ENCODE measurements at regions of chr15 and their contacts with region 1.

Region 1: GRCh38 chr15:63093486-63094205 is 28.0 kb upstream of the LACTB start:
- DNase-seq: peak; percentile 91 to 95
- H3K4me3 ChIP-seq: no peak overlapping the region
- H3K4me1 ChIP-seq: no peaks in the 10 kb centered on the region; the same call in 1 of the 2 replicates
- H3K27me3 ChIP-seq: no peaks in the 10 kb centered on the region

Region 2: GRCh38 chr15:62792986-62793751 is 300.5 kb before region 1 on chr15:
- in situ Hi-C with region 1: loop called (anchors 5 kb)
- DNase-seq: no peak
- H3K4me3 ChIP-seq: no peak overlapping the region
- H3K4me1 ChIP-seq: no peaks in the 10 kb centered on the region
- H3K27me3 ChIP-seq: no peaks in the 10 kb centered on the region

Region 3: DNA sequence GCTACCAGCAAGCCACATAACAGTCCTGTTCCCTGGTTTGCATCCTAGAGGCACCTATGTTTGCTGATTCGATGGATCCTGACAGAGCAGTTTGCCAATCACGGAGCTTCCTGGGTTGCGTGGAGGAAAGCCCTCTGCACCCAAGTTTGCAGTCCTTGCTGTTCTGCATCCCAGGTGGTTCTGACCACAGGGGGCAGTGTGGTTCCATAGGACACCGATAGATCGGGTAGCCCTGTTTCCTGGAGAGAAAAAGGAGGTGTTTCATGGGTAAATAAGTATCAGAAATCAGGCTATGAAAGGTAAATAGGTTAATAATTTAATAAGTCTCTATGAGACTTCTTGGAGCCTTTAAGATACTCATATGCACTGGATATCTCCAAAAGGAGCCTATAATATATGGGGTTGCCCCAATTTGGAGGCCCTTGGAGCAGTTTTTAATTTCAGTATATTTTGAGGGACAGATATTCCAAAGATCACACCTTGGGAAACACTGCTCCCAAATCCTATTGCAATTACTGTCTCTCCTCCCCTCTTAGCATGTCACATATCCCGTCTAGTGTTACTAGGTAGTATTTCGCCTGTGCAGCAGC is 245.7 kb before region 1 on chr15:
- in situ Hi-C with region 1: loop called (anchors 10 kb)
- DNase-seq: peak; percentile 50 to 91
- H3K4me3 ChIP-seq: no peak overlapping the region
- H3K4me1 ChIP-seq: no peaks in the 10 kb centered on the region
- H3K27me3 ChIP-seq: no peaks in the 10 kb centered on the region

Region 4: DNA sequence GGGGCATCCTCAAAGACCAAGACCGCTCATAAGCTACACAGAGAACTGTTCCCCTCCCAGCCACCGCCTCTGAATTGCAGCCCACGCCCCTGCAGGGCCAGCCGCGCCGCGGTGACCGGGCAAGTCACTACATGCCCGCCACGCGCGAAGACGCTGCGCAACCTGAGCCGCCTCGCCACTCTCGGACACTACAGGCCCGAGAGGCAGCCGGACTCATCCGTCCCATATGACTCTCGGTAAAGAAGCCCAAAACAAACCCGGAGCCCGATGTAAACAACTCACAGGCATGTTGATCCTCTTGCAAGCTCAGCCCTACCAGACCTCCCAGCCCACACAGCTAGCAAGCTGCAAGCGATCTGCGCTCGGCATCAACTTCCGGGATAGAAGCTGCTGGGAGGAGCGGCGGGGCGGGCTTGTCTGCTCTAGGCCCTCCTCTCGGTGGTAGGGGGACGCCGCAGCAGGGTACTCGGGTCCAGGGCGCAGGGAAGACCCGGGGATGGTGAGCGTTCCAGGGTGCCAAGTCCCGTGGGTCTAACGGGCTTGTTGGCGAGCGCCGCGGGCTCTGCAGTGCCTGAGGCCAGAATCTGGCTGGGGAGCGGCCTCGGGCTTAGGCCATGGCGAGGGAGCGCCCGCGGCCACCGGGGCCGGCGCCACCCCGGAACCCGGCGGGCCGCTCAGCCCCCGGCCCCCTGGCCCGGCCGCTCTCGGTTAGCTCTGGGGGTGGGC is 63.6 kb after region 1 on chr15 and contains the start of gene RPS27L:
- in situ Hi-C with region 1: no loop called
- DNase-seq: peak; percentile 100
- H3K4me3 ChIP-seq: peak within 1 kb of the TSS; percentile 89
- H3K4me1 ChIP-seq: peaks cover 9% of the 10 kb centered on the region
- H3K27me3 ChIP-seq: no peaks in the 10 kb centered on the region